ENCODE measurements at regions of chr5 and their contacts with region 1.

Region 1: GRCh38 chr5:172770675-172771438 is at the start of gene DUSP1:
- DNase-seq: peak; percentile 99
- H3K4me3 ChIP-seq: peak within 1 kb of the TSS; percentile 93 to 97 (median 94)
- H3K27ac ChIP-seq: peak within 1 kb of the TSS; percentile 98 to 100
- H3K4me1 ChIP-seq: peaks cover 0 to 2% of the 10 kb centered on the region in 2 donors
- H3K27me3 ChIP-seq: no peaks in the 10 kb centered on the region
- CTCF ChIP-seq: peak; percentile 43 to 52 (median 47)
- POLR2A ChIP-seq: peak; percentile 100
- total RNA-seq, gene DUSP1: 752 to 1,562 (median 1,015) TPM

Region 2: DNA sequence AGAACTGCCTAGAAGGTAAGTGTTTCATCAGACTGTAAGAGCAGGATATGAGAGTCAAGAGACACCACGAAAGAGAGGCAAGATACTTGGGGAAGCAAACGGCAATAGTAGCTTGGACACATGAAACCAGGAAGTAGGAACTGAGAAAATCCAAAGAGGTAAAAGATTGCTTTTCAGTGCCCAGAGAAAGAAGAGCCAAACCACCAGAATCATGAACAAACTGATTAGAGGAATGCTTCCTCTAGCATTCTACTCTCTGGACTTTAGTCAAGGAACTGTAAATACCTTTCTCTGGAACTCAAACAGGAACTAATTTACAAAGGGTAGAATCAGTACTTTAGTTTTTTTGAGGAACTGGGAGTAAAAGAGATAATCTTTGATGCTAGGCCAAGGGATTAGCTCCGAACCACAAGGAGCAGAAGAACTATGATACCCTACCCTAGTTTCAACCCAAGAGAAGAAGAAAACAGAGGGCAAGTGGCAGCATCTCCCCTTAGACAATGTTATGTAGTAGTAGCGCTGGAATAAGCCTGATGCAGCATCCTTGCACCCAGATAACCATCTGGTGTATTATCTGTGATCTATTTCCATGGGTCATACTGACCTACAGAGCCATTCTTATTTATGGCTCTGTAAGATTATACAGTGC is 535.6 kb before region 1 on chr5:
- intact Hi-C with region 1: no loop called
- DNase-seq: no peak
- H3K4me3 ChIP-seq: no peak overlapping the region
- H3K27ac ChIP-seq: peak overlapping the region; percentile 57 to 70
- H3K4me1 ChIP-seq: peaks cover 0 to 16% of the 10 kb centered on the region in 2 donors
- H3K27me3 ChIP-seq: no peaks in the 10 kb centered on the region
- CTCF ChIP-seq: no peak
- POLR2A ChIP-seq: no peak

Region 3: GRCh38 chr5:172758083-172758833 is 12.6 kb before region 1 on chr5:
- intact Hi-C with region 1: no loop called
- DNase-seq: no peak
- H3K4me3 ChIP-seq: no peak overlapping the region
- H3K27ac ChIP-seq: peak overlapping the region in 1 of 2 donors; percentile 32
- H3K4me1 ChIP-seq: no peaks in the 10 kb centered on the region
- H3K27me3 ChIP-seq: no peaks in the 10 kb centered on the region
- CTCF ChIP-seq: no peak
- POLR2A ChIP-seq: no peak

Region 4: DNA sequence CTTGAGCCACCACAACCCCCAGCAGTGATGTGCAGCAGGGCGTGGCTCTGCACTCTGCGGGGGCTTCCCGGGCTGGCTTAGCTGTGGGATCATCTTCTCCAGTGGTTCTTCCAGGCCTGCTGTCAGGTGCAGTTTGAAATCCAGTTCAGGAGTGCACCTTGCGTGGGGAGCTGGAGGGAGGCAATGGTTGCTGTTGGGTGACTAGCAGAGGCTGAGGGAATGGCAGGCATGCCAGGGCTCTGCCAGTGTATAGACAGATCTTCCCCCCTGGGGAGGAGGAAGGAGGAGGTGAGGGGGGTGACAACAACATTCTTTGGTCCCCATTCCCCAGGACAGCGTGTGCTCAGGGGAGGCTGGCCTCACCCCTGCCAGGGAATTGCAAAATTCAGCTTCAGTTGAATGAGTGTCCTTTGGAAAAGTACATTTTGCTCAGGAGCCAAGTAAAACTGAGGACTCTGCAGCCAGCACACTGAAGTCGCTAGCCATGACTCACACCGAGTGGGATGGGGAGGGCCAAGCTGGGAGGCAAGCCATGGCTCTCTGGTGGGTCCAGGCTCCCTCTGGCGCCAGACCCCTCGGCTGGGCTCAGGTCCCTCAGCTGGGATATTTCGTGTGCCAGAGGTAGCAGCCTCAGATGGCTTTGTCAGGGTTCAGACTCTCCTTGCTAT is 98.2 kb after region 1 on chr5:
- intact Hi-C with region 1: loop called (anchors 10 kb)
- DNase-seq: peak; percentile 73 to 93
- H3K4me3 ChIP-seq: peak overlapping the region in 1 of 3 donors; percentile 34
- H3K27ac ChIP-seq: peak overlapping the region; percentile 88 to 93
- H3K4me1 ChIP-seq: peaks cover 3 to 51% of the 10 kb centered on the region in 2 donors
- H3K27me3 ChIP-seq: no peaks in the 10 kb centered on the region
- CTCF ChIP-seq: peak in 2 of 3 donors; percentile 12 to 14
- POLR2A ChIP-seq: no peak

Region 5: DNA sequence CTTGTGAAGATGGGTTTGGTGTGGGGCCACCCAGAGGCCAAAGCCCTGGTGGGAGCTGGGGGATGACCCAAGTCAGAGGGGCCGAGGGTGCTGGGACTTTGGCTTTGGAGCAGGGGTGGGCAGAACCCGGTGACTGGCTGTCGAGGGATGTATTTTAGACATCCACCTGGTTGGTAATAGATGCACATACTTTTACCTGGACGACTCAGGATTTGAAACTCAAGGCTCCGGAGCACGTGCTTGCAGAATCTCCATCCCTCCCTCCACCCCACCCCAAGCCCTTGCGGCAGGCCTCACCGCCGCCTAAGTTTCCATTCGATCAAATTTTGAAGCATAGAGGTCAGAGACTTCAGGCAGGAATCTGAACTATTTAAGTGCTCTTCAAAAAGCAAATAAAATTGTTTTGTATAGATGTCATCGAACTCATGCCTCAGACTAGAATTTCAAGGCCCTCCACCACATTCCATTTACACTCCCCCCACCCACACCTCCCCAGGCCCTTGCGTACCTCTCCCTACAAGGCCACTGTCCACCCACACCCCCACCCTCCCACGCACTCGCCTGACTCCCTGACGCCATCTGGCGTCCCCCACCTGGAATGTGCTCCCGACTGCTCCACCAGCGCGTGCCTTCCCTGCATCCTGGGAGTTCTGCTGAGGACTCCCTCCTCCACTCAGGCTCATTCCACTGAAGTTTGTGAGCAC is 131.8 kb after region 1 on chr5:
- intact Hi-C with region 1: loop called (anchors 10 kb)
- DNase-seq: peak in 1 of 2 donors; percentile 45
- H3K4me3 ChIP-seq: no peak overlapping the region
- H3K27ac ChIP-seq: peak overlapping the region; percentile 92 to 98
- H3K4me1 ChIP-seq: peaks cover 0 to 21% of the 10 kb centered on the region in 2 donors
- H3K27me3 ChIP-seq: no peaks in the 10 kb centered on the region
- CTCF ChIP-seq: peak in 1 of 3 donors; percentile 13
- POLR2A ChIP-seq: no peak

Measured in breast epithelium (tissue), 4 donors.